ENCODE measurements at regions of chr3 and their contacts with region 1.

Region 1: GRCh38 chr3:113764698-113765097 is 17.9 kb downstream of the ATP6V1A start:
- DNase-seq: no peak
- ATAC-seq: no peak
- H3K4me3 ChIP-seq: no peak overlapping the region
- H3K27ac ChIP-seq: no peak overlapping the region
- H3K4me1 ChIP-seq: peaks cover 0 to 6% (median 0%) of the 10 kb centered on the region in 9 donors
- H3K27me3 ChIP-seq: no peaks in the 10 kb centered on the region
- CTCF ChIP-seq: no peak

Region 2: DNA sequence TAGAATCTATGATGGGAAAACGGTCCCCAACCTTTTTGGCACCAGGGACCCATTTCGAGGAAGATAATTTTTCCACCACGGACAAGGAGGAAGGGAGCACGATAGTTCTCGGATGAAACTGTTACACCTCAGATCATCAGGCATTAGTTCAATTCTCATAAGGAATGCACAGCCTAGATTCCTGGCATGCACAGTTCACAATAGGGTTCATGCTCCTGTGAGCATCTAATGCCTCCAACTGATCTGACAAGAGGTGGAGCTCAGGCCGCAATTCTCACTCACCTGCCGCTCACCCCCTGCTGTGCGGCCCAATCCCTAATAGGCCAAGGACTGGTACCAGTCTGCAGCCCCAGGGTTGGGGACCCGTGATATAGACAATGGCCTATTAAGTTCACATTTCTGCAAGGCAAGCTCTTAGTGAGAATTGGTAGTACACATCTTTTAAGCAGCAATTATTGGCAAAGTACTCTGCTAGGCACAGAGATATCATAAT is 816.3 kb before region 1 on chr3:
- intact Hi-C with region 1: loop called in 1 of 10 experiments (anchors 5 kb)
- DNase-seq: no peak
- ATAC-seq: no peak
- H3K4me3 ChIP-seq: no peak overlapping the region
- H3K27ac ChIP-seq: no peak overlapping the region
- H3K4me1 ChIP-seq: no peaks in the 10 kb centered on the region
- H3K27me3 ChIP-seq: no peaks in the 10 kb centered on the region
- CTCF ChIP-seq: no peak